Ascending aorta (tissue), 2 donors: ENCODE measurements at regions of chr18 and their contacts with region 1.

Region 1: DNA sequence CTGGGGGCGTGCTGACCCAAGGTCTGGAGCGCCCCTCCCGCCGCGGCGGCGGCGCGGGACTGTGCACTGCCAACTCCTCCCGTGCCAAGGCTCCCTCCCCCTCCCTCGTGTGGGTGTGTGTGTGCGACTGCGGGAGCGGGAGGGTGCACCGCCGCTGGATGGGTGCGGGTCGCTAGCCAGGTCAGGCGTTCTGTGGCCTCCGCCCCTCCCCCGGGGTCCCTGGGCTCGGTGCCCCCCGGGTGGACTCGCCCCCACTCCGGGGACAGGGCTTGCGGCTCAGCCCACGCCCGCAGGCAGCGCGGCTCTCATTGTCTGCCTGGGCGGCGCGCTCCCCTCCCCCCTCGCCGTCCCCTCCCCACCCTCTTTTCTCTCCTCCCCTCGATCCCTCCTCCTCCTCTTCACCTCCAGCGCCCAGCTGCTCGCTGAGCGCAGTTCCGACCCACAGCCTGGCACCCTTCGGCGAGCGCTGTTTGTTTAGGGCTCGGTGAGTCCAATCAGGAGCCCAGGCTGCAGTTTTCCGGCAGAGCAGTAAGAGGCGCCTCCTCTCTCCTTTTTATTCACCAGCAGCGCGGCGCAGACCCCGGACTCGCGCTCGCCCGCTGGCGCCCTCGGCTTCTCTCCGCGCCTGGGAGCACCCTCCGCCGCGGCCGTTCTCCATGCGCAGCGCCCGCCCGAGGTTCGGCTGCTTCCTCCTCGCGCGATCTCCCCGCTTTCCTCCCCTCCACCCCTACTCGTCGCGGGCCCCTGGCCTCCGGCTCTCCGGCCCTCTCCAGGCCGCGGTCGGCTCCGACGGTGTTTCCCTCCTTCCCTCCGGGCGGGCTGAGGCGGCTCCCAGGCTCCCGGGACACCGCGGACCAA is at the start of gene GATA6:
- DNase-seq: peak; percentile 88 to 97
- H3K4me3 ChIP-seq: peak within 1 kb of the TSS; percentile 89 to 90
- H3K27ac ChIP-seq: peak within 1 kb of the TSS; percentile 98 to 99
- H3K4me1 ChIP-seq: peaks cover 0 to 5% of the 10 kb centered on the region in 2 donors
- H3K27me3 ChIP-seq: no peaks in the 10 kb centered on the region
- CTCF ChIP-seq: peak; percentile 31 to 59 (median 44)
- total RNA-seq, gene GATA6: 89.3 TPM

Region 2: DNA sequence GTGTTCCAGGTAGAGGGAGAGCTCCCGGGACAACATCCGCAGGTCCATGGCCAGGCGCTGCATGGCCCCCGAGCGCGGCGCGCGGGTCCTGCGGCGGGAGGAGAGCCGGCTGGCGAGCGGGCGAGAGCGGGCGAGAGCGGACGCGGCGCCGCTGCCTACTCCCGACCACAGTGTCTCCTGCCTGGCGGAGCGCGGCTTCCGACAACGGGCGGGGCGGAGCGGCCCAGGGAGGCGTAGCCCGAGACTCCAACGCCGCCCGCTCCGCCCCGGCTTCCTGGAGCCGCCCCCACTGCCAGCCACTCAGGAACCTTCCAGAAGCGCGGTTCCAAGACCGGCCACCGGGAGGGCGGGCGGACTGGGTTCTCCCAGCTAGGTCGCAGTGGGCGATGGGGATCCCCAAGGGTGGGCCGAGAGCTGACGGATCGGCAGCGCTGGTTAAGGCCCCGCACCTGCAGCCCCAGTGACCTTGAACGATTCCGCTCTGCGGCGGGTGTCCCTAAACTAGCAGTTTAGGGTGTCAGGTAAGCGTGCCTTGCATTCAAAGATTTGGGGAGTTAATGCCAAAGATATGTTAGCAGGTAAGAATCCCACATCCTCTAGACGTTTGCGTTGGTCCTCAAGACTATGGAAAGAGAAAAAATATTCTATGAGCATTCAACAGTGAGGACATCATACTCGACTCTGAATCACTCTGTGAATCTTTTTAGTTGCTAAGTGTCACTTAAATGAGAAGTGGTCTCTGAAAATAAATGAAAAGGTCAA is 464.5 kb before region 1 on chr18 and contains the start of gene ABHD3:
- intact Hi-C with region 1: loop called (anchors 10 kb)
- DNase-seq: peak; percentile 73 to 96
- H3K4me3 ChIP-seq: peak within 1 kb of the TSS; percentile 94 to 98
- H3K27ac ChIP-seq: peak within 1 kb of the TSS; percentile 96 to 97
- H3K4me1 ChIP-seq: peaks cover 0 to 2% of the 10 kb centered on the region in 2 donors
- H3K27me3 ChIP-seq: no peaks in the 10 kb centered on the region
- CTCF ChIP-seq: peak; percentile 48 to 83 (median 49)
- total RNA-seq, gene ABHD3: 9.6 TPM

Region 3: GRCh38 chr18:21851327-21851972 is 317.8 kb before region 1 on chr18:
- intact Hi-C with region 1: no loop called
- DNase-seq: no peak
- H3K4me3 ChIP-seq: no peak overlapping the region
- H3K27ac ChIP-seq: no peak overlapping the region
- H3K4me1 ChIP-seq: no peaks in the 10 kb centered on the region
- H3K27me3 ChIP-seq: no peaks in the 10 kb centered on the region
- CTCF ChIP-seq: peak; percentile 18 to 56 (median 43)

Region 4: GRCh38 chr18:21997207-21998143 is 171.8 kb before region 1 on chr18:
- intact Hi-C with region 1: loop called (anchors 2 kb)
- DNase-seq: no peak
- H3K4me3 ChIP-seq: no peak overlapping the region
- H3K27ac ChIP-seq: peak overlapping the region; percentile 53 to 54
- H3K4me1 ChIP-seq: peaks cover 0 to 21% of the 10 kb centered on the region in 2 donors
- H3K27me3 ChIP-seq: no peaks in the 10 kb centered on the region
- CTCF ChIP-seq: peak; percentile 40 to 87 (median 82)

Region 5: DNA sequence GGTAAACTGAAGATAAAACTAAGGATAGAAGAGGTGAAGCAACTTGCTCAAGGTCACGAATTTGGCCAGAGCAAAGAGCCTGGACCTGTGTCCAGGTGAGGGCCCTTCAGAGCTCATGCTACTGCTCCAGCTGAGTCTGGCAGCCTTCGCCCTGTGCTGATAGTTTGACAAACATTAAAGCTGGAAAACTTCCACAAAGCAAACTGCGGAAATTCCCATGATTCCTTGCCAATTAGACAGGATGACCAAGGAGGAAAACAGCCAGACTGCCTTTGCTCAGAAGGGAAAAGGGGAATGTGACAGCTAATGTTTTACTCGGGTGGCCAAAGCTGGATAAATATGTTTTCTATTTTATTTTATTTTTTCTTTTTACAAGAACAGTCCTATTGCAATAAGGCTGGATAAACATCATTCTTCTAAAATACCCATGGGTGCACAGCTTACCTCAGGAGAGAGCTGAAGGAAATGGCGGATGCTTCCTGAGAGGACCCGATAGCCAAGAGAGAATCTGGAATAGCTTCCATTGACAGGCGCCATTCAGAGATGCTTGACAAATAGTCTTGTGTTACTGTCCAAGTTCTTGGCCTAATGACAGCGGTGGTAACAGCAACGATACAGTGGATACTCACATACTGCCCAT is 253.8 kb after region 1 on chr18:
- intact Hi-C with region 1: loop called (anchors 5 kb)
- DNase-seq: peak in 1 of 2 donors; percentile 80
- H3K4me3 ChIP-seq: no peak overlapping the region
- H3K27ac ChIP-seq: peak overlapping the region; percentile 71
- H3K4me1 ChIP-seq: peaks cover 8 to 26% of the 10 kb centered on the region in 2 donors
- H3K27me3 ChIP-seq: no peaks in the 10 kb centered on the region
- CTCF ChIP-seq: no peak

Region 6: DNA sequence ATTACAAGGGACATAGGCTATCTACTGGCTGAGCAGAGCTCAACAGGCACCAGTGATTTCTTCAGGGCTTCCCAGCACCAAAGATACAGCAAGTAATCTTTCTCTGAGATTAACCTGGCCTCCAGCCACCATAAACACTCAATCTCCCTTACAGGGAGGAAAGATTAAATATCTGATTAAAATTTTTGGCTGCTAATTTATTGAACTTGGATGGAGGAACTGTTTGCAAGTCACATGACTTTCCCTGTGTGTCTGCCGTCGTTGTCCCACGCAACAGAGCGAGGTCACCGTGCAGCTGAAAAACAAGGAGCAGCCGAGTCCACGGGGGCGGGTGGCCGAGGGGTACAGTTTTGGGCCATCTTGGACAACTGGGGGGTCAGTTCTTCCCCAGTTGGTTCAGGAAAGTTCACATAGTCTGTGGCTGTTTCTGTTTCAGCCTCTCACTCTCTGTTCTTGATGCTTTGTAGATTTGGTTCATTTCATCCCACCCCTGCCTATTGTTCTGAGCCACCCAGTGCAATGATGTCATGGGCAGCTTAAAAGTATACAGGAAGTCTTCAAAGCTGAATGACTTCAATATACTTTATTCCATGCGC is 435.3 kb after region 1 on chr18:
- intact Hi-C with region 1: loop called (anchors 2 kb)
- DNase-seq: peak in 1 of 2 donors; percentile 78
- H3K4me3 ChIP-seq: peak overlapping the region in 1 of 2 donors; percentile 15
- H3K27ac ChIP-seq: peak overlapping the region; percentile 70 to 84
- H3K4me1 ChIP-seq: peaks cover 7 to 42% of the 10 kb centered on the region in 2 donors
- H3K27me3 ChIP-seq: no peaks in the 10 kb centered on the region
- CTCF ChIP-seq: no peak

Region 7: GRCh38 chr18:23231340-23232021 is 1062.2 kb after region 1 on chr18:
- intact Hi-C with region 1: loop called (anchors 5 kb)
- DNase-seq: peak; percentile 86 to 96
- H3K4me3 ChIP-seq: no peak overlapping the region
- H3K27ac ChIP-seq: peak overlapping the region; percentile 96 to 97
- H3K4me1 ChIP-seq: peaks cover 15 to 36% of the 10 kb centered on the region in 2 donors
- H3K27me3 ChIP-seq: no peaks in the 10 kb centered on the region
- CTCF ChIP-seq: no peak